T-cell (primary cell): ENCODE measurements at regions of chr4 and their contacts with region 1.

Region 1: DNA sequence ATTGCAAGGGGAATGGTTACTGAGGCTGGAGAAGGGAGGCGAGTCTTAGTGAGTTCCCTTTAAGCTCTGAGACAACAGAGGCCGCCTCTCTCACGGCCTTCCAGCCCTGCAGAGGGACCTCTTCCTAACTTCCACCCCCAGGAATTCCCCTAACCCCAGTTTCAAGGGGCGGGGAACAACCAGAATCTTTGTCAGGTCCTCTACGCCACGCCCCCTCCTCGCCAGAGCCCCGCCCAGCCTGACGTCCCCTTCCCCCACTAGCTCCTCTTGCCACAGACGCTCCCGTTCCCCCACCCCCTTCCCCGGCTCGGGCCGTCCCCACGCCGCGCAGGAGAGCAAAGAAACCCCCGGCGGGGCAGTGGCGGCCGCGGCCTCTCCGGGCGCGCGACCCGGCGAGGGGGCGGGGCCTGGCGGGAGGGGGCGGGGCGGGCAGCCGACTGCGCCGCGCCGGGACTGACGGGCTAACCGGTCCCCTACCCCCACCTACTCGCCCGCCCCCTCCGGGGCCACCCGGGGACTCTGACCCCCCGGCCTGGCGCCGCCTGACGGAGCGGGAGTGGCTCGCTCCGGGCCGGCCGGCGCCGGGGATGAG is 12.3 kb upstream of the TMEM156 start:
- DNase-seq: peak; percentile 79 to 98 (median 95)
- ATAC-seq: peak; percentile 80 to 85 (median 80)
- H3K4me3 ChIP-seq: peak overlapping the region; percentile 52 to 66
- H3K4me3 Mint-ChIP-seq: peak overlapping the region; percentile 85 to 90 (median 85)
- H3K27ac ChIP-seq: peak overlapping the region; percentile 82
- H3K27ac Mint-ChIP-seq: peak overlapping the region; percentile 58 to 92
- H3K4me1 ChIP-seq: peaks cover 19 to 33% of the 10 kb centered on the region in 2 experiments
- H3K4me1 Mint-ChIP-seq: peaks cover 47 to 55% (median 53%) of the 10 kb centered on the region in 3 donors
- H3K27me3 ChIP-seq: no peaks in the 10 kb centered on the region
- H3K27me3 Mint-ChIP-seq: no peaks in the 10 kb centered on the region

Region 2: GRCh38 chr4:38948551-38948950 is 95.9 kb before region 1 on chr4:
- CTCF ChIA-PET with region 1: interaction called in 1 of 2 experiments, 9 read pairs
- POLR2A ChIA-PET with region 1: interaction called, 3 to 11 read pairs
- DNase-seq: no peak
- ATAC-seq: no peak
- H3K4me3 ChIP-seq: no peak overlapping the region
- H3K4me3 Mint-ChIP-seq: no peak overlapping the region
- H3K27ac ChIP-seq: peak overlapping the region; percentile 48
- H3K27ac Mint-ChIP-seq: peak overlapping the region in 1 of 2 donors; percentile 91
- H3K4me1 ChIP-seq: peaks cover 7 to 13% of the 10 kb centered on the region in 2 experiments
- H3K4me1 Mint-ChIP-seq: peaks cover 21 to 31% (median 28%) of the 10 kb centered on the region in 3 donors
- H3K27me3 ChIP-seq: no peaks in the 10 kb centered on the region
- H3K27me3 Mint-ChIP-seq: no peaks in the 10 kb centered on the region

Region 3: DNA sequence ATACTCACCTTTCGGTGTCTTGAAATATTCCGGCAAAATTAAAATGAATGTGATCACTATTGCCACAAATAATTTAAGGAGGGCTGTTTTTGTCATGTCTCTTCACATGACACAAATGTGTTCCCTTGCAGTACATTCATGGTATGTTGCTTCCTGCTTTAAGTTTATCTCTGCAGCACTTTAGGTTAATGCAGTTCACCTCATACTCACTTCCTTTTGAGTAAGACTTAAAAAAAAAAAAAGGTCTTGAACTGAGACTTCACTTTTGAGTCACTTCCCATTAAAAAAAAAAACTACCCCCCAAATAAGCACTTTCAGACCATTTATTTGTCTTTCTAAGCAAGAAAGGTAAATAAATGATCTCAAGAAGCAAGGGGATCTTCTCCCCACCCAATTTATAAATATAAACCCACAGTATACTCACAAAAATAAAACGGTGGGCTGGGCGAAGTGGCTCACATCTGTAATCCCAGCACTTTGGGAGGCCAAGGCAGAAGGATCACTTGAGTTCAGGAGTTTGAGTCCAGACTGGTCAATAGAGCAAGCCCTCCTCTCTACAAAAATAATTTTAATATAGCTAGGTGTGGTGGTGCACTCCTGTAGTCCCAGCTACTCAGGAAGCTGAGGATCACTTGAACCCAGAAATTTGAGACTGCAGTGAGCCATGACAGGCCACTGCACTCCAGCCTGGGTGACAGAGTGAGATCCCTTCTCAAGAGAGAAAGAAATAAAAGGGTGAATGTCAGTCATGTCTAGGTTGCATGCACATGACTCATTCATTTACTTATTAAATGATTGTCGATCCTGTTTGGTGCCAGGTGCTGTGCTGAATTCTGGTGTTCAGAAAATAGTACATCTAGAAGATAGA is 12.0 kb before region 1 on chr4 and contains the start of gene TMEM156:
- CTCF ChIA-PET with region 1: interaction called, 3 to 28 read pairs
- POLR2A ChIA-PET with region 1: interaction called, 7 to 13 read pairs
- DNase-seq: peak in 4 of 35 experiments; percentile 20 to 79 (median 27)
- ATAC-seq: peak; percentile 87 to 94 (median 90)
- H3K4me3 ChIP-seq: peak within 1 kb of the TSS; percentile 53 to 69
- H3K4me3 Mint-ChIP-seq: peak within 1 kb of the TSS; percentile 78 to 81 (median 79)
- H3K27ac ChIP-seq: peak within 1 kb of the TSS; percentile 62
- H3K27ac Mint-ChIP-seq: peak within 1 kb of the TSS; percentile 84 to 86
- H3K4me1 ChIP-seq: peaks cover 25 to 41% of the 10 kb centered on the region in 2 experiments
- H3K4me1 Mint-ChIP-seq: peaks cover 42 to 47% (median 45%) of the 10 kb centered on the region in 3 donors
- H3K27me3 ChIP-seq: no peaks in the 10 kb centered on the region
- H3K27me3 Mint-ChIP-seq: no peaks in the 10 kb centered on the region
- total RNA-seq, gene TMEM156: 7.5 to 23.1 (median 12.5) TPM

Region 4: GRCh38 chr4:39054497-39054896 is 10.0 kb after region 1 on chr4:
- CTCF ChIA-PET with region 1: interaction called, 3 to 9 read pairs
- POLR2A ChIA-PET with region 1: interaction called in 1 of 2 experiments, 10 read pairs
- DNase-seq: no peak
- ATAC-seq: no peak
- H3K4me3 ChIP-seq: no peak overlapping the region
- H3K4me3 Mint-ChIP-seq: no peak overlapping the region
- H3K27ac ChIP-seq: no peak overlapping the region
- H3K27ac Mint-ChIP-seq: no peak overlapping the region
- H3K4me1 ChIP-seq: no peaks in the 10 kb centered on the region
- H3K4me1 Mint-ChIP-seq: peaks cover 14 to 44% (median 39%) of the 10 kb centered on the region in 3 donors
- H3K27me3 ChIP-seq: no peaks in the 10 kb centered on the region
- H3K27me3 Mint-ChIP-seq: no peaks in the 10 kb centered on the region

Region 5: DNA sequence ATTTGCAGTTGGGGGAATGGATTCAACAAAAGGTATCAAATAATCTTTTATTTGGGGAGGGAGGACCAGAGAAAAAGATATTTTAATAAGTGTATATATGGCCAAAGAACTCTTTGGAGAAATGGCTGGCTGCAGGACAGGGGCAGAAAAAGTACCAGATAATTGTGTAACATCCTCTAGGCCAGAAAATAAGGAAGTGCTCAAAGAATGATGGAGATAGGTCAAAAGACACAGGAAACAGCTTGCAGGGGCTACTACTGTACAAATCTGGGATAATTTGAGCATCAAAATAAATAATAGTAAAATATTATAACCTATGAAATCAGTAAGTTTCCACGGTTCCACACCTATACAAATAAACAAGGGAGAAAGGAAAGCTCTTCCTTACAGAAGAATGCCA is 52.4 kb after region 1 on chr4:
- CTCF ChIA-PET with region 1: no interaction called
- POLR2A ChIA-PET with region 1: no interaction called
- DNase-seq: no peak
- ATAC-seq: no peak
- H3K4me3 ChIP-seq: no peak overlapping the region
- H3K4me3 Mint-ChIP-seq: no peak overlapping the region
- H3K27ac ChIP-seq: no peak overlapping the region
- H3K27ac Mint-ChIP-seq: no peak overlapping the region
- H3K4me1 ChIP-seq: no peaks in the 10 kb centered on the region
- H3K4me1 Mint-ChIP-seq: no peaks in the 10 kb centered on the region
- H3K27me3 ChIP-seq: no peaks in the 10 kb centered on the region
- H3K27me3 Mint-ChIP-seq: no peaks in the 10 kb centered on the region

Region 6: GRCh38 chr4:39134683-39135319 is 90.3 kb after region 1 on chr4:
- CTCF ChIA-PET with region 1: interaction called in 1 of 2 experiments, 11 read pairs
- POLR2A ChIA-PET with region 1: no interaction called
- DNase-seq: no peak
- ATAC-seq: peak in 1 of 4 experiments; percentile 23
- H3K4me3 ChIP-seq: no peak overlapping the region
- H3K4me3 Mint-ChIP-seq: no peak overlapping the region
- H3K27ac ChIP-seq: no peak overlapping the region
- H3K27ac Mint-ChIP-seq: no peak overlapping the region
- H3K4me1 ChIP-seq: peaks cover 0 to 3% of the 10 kb centered on the region in 2 experiments
- H3K4me1 Mint-ChIP-seq: peaks cover 6 to 13% (median 10%) of the 10 kb centered on the region in 3 donors
- H3K27me3 ChIP-seq: no peaks in the 10 kb centered on the region
- H3K27me3 Mint-ChIP-seq: no peaks in the 10 kb centered on the region

Region 7: GRCh38 chr4:39458505-39459300 is 414.2 kb after region 1 on chr4 and contains the starts of genes LIAS and RPL9:
- CTCF ChIA-PET with region 1: no interaction called
- POLR2A ChIA-PET with region 1: interaction called, 3 to 15 read pairs
- DNase-seq: peak; percentile 80 to 99 (median 91)
- ATAC-seq: peak; percentile 85 to 86 (median 86)
- H3K4me3 ChIP-seq: peak within 1 kb of the TSS; percentile 77 to 98
- H3K4me3 Mint-ChIP-seq: peak within 1 kb of the TSS; percentile 92 to 96 (median 95)
- H3K27ac ChIP-seq: peak within 1 kb of the TSS; percentile 97
- H3K27ac Mint-ChIP-seq: peak within 1 kb of the TSS; percentile 98 to 99
- H3K4me1 ChIP-seq: peaks cover 15 to 20% of the 10 kb centered on the region in 2 experiments
- H3K4me1 Mint-ChIP-seq: peaks cover 49 to 57% (median 51%) of the 10 kb centered on the region in 3 donors
- H3K27me3 ChIP-seq: no peaks in the 10 kb centered on the region
- H3K27me3 Mint-ChIP-seq: no peaks in the 10 kb centered on the region
- total RNA-seq, gene LIAS: 11.3 to 22.8 (median 19.5) TPM
- total RNA-seq, gene RPL9: 2,481 to 3,129 (median 2,646) TPM